Ovary (tissue), 10 donors: ENCODE measurements at regions of chr18 and their contacts with region 1.

Region 1: DNA sequence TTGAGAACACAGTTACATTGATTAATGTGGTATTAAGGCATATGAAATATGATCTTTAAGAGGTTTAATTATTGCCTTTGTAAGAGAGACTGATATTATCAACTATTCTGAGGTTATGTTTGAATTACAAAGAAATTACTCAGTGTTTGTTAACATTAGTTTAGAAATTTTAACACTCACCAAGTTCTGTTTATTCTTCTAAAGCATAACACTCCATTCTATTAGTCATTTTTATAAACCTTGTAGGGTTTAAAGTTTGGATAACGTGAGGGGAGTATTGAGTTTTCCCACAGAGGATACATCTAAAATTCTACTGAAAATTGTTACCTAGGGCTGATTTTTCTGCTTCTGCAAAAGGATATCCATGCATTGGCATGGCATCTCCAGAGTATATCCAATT is 7.7 kb downstream of the CCDC178 start:
- DNase-seq: no peak
- H3K4me3 ChIP-seq: no peak overlapping the region
- H3K27ac ChIP-seq: no peak overlapping the region
- H3K4me1 ChIP-seq: no peaks in the 10 kb centered on the region
- H3K27me3 ChIP-seq: no peaks in the 10 kb centered on the region
- CTCF ChIP-seq: no peak
- EP300 ChIP-seq: no peak
- POLR2A ChIP-seq: no peak

Region 2: DNA sequence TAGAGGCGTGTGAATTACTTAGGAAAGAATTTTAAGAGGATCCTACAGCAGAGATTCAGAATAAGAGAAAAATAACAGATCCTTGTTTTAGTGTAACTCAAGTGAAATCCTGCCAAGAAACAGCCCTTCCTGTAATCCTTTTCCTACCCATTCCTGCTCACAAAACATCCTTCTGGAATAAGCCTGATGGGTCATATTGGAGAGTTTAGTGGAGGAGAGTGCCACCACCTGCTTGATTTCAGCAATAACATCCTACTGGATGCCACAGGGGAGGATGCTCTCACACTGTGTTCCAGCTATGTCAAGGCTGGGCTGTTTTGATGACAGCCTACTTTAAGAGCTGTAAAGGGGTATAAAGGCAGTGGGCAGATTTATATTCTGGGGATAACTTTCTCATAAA is 62.4 kb after region 1 on chr18:
- intact Hi-C with region 1: loop called in 1 of 4 experiments (anchors 10 kb)
- DNase-seq: peak in 3 of 5 donors; percentile 20 to 27 (median 21)
- H3K4me3 ChIP-seq: no peak overlapping the region
- H3K27ac ChIP-seq: no peak overlapping the region
- H3K4me1 ChIP-seq: no peaks in the 10 kb centered on the region
- H3K27me3 ChIP-seq: no peaks in the 10 kb centered on the region
- CTCF ChIP-seq: peak in 1 of 3 donors; percentile 47
- EP300 ChIP-seq: no peak
- POLR2A ChIP-seq: no peak